ENCODE measurements at regions of chr1 and their contacts with region 1.

Region 1: DNA sequence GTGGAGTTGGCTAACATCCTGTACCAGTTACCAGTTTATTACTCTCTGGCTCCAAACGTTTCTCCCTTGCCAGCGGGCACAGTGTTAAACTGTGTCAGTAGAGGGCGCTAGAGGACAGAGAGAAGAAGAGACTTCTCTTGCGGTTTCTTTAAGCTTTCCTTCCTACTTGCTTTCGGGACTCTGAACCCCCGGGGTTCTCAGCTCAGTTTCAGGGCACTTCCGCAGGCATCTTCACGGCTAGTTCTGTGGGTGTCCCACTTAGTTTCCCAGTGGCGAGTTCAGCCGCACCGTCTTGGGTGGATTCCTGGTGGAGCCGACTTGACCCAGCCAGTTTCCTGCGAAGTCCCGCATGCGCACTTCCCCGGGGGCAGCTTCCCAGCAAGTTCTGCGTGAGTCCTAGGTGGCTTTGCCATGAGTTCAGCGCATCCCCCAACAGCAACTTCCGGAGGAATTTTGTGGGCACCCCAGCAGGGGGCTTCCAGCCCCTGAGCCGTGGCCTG is 37.9 kb upstream of the BTG2 start:
- DNase-seq: peak; percentile 86
- ATAC-seq: peak; percentile 58
- H3K4me3 Mint-ChIP-seq: peak overlapping the region; percentile 76
- H3K27ac Mint-ChIP-seq: no peak overlapping the region; the same call in 1 of the 2 replicates
- H3K4me1 Mint-ChIP-seq: peaks cover 11% of the 10 kb centered on the region
- H3K27me3 Mint-ChIP-seq: peaks cover 10% of the 10 kb centered on the region
- CTCF ChIP-seq: peak; percentile 85

Region 2: DNA sequence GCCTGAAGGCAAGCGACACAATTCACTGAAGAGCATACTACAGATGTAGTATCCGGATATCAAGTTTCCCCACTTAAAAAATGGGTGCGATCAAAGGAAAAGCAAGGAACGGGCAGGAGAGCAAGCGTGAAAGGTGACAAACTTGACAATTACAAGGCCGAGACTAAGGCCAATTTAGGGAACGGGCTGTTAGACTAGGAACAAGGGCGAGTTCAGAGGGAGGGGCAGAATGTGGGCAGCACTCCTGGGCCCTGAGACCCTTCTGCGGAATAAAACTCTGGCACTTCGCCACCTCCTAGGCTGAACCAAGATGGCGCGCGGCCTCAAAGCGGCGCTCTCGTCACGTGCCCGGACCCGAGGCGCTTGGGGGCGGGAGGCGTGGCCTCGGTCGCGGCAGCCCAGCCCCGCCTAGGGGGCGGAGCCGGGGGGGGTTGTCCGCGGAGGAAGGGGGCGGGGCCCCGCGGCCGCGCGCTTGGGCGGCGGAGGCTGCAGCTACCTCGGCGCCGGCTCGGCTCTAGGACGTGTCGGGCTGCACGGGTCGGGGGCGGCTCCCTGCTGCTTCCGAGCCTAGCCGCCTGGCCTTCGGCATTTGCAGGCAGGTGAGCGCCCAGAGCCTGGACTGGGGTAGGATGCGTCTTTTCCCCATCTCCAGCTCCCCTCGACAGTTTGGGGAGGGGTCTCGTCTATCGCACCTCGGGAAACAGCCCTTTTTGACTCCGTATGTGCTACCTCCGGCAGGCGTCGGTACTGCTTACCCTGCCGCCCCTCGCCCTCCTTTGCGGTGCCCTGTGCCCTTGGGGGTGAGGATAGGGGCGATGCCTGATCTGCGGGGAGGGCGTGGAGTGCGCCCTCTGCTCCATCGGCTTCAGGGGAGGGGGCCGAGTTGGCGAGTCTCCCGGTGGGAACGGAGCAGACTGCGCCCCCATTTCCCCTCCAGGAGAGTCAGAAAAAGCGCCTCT is 241.1 kb before region 1 on chr1 and contains the start of gene PPFIA4:
- CTCF ChIA-PET with region 1: interaction called, 89 read pairs
- POLR2A ChIA-PET with region 1: no interaction called
- DNase-seq: peak; percentile 88
- ATAC-seq: peak; percentile 82
- H3K4me3 Mint-ChIP-seq: peak within 1 kb of the TSS; percentile 77
- H3K27ac Mint-ChIP-seq: no peak within 1 kb of the TSS
- H3K4me1 Mint-ChIP-seq: peaks cover 15% of the 10 kb centered on the region
- H3K27me3 Mint-ChIP-seq: peaks cover 29% of the 10 kb centered on the region
- CTCF ChIP-seq: no peak
- total RNA-seq, gene PPFIA4: 21.1 to 24.9 TPM (median 22.7 TPM) in 3 replicates

Region 3: GRCh38 chr1:203084588-203085502 is 182.6 kb before region 1 on chr1:
- CTCF ChIA-PET with region 1: interaction called, 80 read pairs
- POLR2A ChIA-PET with region 1: no interaction called
- DNase-seq: peak; percentile 84
- ATAC-seq: peak; percentile 59
- H3K4me3 Mint-ChIP-seq: no peak overlapping the region
- H3K27ac Mint-ChIP-seq: no peak overlapping the region
- H3K4me1 Mint-ChIP-seq: peaks cover 34% of the 10 kb centered on the region
- H3K27me3 Mint-ChIP-seq: no peaks in the 10 kb centered on the region; the same call in 1 of the 2 replicates
- CTCF ChIP-seq: peak; percentile 88

Region 4: GRCh38 chr1:203166566-203166940 is 100.8 kb before region 1 on chr1:
- CTCF ChIA-PET with region 1: interaction called, 26 read pairs
- POLR2A ChIA-PET with region 1: no interaction called
- DNase-seq: no peak
- ATAC-seq: peak; percentile 76
- H3K4me3 Mint-ChIP-seq: no peak overlapping the region
- H3K27ac Mint-ChIP-seq: no peak overlapping the region
- H3K4me1 Mint-ChIP-seq: peaks cover 3% of the 10 kb centered on the region; the same call in 1 of the 2 replicates
- H3K27me3 Mint-ChIP-seq: no peaks in the 10 kb centered on the region; the same call in 1 of the 2 replicates
- CTCF ChIP-seq: no peak

Region 5: DNA sequence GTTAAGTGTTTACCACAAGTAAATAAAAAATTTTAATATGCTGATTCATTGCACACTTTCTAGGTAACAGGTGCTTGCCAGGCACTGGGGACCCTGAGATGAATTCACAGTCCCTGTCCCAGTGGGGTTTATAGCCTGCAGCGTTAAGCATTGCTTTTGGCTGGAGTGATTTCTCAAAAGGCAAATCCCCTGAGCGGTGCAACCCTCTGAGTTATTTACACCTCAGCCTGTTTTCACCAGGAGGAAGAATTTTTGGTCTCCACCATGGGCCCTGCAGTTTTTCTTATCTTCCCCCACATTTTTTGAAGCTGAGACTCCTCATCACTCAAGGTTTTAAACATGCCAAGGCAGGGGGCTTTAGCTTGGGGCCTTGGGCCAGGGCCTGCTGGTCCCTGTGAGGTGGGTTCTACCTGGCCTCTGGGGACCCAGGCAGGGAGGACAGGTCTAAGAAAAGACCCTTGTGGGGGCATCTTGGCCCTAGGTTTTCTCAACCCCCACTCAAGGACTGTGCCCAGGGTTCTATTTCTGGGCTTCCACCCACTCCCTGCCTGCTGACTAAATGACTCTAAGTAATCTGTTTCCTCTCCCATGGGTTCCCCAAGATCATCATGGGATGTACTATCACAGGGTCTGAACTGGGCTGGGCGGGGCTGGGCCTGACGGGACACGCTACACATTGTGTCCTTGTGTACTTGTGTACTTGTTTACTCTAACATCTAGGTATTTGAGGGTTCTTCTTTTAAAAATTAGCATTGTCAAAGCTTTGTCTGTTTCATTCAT is 27.7 kb before region 1 on chr1:
- CTCF ChIA-PET with region 1: interaction called, 16 read pairs
- POLR2A ChIA-PET with region 1: no interaction called
- DNase-seq: no peak
- ATAC-seq: no peak
- H3K4me3 Mint-ChIP-seq: no peak overlapping the region
- H3K27ac Mint-ChIP-seq: no peak overlapping the region
- H3K4me1 Mint-ChIP-seq: no peaks in the 10 kb centered on the region
- H3K27me3 Mint-ChIP-seq: peaks cover 42% of the 10 kb centered on the region
- CTCF ChIP-seq: no peak

Region 6: GRCh38 chr1:203304919-203305808 is 37.8 kb after region 1 on chr1 and contains the start of gene BTG2:
- CTCF ChIA-PET with region 1: interaction called, 66 read pairs
- POLR2A ChIA-PET with region 1: interaction called, 8 read pairs
- DNase-seq: peak; percentile 84
- ATAC-seq: peak; percentile 80
- H3K4me3 Mint-ChIP-seq: peak within 1 kb of the TSS; percentile 79
- H3K27ac Mint-ChIP-seq: no peak within 1 kb of the TSS
- H3K4me1 Mint-ChIP-seq: peaks cover 55% of the 10 kb centered on the region
- H3K27me3 Mint-ChIP-seq: peaks cover 96% of the 10 kb centered on the region
- CTCF ChIP-seq: no peak
- total RNA-seq, gene BTG2: 13.5 to 19.4 TPM (median 15.4 TPM) in 3 replicates

Region 7: DNA sequence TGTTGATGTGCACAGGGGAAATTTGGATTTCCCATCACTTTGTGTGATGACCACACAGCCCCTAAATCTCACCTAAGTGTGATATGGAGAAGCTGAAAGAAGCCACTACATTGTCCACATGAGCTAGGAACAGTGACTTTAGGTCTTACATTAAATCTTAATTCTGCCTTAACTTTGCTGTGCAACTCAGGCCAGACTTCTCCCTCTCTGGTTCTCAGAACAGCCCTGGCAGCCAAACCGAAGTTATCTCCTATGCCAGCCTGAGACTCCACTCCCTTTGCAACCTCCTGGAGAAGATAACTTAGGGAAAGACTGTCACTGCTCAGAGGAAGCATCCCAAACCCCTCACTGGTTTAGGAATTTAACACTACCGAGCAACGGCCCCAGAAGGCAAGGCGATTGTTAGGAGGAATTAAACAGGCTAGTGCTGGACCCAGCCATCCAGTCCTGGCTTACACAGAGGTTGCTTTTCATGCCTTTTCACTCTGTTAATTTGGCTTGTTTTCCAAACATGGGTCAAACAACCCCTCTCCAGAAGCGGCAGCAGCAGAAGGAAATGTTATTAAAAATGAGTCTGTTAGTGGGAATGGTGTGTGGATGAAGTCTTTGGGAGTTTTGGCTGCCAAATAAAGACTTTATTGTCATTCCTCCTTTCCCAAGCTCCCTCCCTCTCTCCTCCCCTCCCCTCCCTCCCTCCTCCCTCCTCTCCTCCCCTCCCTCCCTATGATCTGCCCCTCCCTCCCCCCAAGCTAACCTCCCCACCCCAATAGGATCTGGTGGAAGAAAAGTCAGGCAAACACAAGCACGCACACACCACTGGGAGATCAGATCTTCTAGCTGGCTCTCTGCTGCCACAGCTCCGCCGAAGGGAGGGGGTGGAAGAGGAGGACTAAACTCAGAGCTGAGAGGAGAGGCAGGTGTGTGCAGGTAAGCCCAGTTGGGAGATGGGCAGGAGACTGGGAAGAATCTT is 207.9 kb after region 1 on chr1 and contains the start of gene PRELP:
- CTCF ChIA-PET with region 1: interaction called, 24 read pairs
- POLR2A ChIA-PET with region 1: no interaction called
- DNase-seq: peak; percentile 62
- ATAC-seq: peak; percentile 91
- H3K4me3 Mint-ChIP-seq: peak within 1 kb of the TSS; percentile 32
- H3K27ac Mint-ChIP-seq: no peak within 1 kb of the TSS
- H3K4me1 Mint-ChIP-seq: peaks cover 21% of the 10 kb centered on the region
- H3K27me3 Mint-ChIP-seq: no peaks in the 10 kb centered on the region; the same call in 1 of the 2 replicates
- CTCF ChIP-seq: no peak
- total RNA-seq, gene PRELP: 0.17 to 0.23 TPM (median 0.18 TPM) in 3 replicates